Endothelial cell of umbilical vein (primary cell): ENCODE measurements at regions of chr10 and their contacts with region 1.

Region 1: DNA sequence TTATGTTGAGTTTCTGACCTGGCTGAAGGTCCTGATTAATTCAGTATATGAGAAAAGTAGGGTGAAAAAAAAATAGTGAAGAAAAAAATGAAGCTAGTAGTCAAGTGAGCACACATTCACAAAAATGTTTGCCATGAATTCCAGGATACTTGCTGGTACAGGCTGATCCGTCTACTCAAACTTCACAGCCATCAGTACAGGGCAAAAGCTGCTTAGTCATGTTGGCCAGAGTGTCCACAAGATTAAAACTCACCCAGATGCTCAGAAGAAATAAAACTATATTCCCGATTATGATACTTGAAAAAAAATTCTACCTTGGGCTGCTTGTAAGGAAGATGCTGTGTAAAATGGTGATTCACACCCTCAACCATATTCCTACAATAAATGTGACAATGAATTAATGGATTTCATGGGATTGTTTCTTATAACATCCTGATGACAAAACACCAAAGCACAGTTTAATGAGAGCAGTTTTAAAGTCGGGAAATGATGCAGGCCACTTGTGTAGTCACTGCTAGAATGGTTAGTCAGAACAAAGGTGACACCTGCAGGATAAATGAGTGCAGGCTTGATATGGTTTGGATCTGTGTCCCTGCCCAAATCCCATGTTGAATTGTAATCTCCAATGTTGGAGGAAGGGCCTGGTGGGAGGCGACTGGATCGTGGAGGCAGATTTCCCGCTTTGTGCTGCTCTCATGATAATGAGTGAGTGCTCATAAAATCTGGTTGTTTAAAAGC is 49.2 kb upstream of the ANKRD1 start:
- DNase-seq: no peak
- H3K4me3 ChIP-seq: no peak overlapping the region
- H3K27ac ChIP-seq: peak overlapping the region; percentile 28
- H3K4me1 ChIP-seq: peaks cover 8% of the 10 kb centered on the region
- H3K27me3 ChIP-seq: no peaks in the 10 kb centered on the region
- CTCF ChIP-seq: no peak
- POLR2A ChIP-seq: no peak

Region 2: DNA sequence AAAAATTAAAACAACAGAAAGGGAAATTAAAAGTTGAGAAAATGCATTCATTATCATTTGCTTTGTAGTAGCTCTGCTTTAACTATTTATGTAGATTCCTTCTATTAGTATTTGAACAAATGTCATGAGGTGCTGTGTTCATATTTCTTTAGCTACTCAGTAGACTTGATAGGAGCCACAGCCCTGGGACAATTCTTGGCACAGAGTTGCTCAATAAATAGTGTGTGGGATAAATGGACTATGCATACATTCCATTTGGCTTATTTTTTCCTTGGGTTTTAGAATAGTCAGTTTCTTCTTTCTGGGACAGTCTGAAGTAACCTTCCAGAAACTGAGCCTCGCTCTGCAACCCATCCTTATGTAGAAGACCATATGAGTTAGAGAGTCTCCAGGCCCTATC is 84.9 kb before region 1 on chr10:
- CTCF ChIA-PET with region 1: interaction called, 5 read pairs
- POLR2A ChIA-PET with region 1: no interaction called
- dilution Hi-C with region 1: no loop called
- intact Hi-C with region 1: loop called (anchors 1 kb)
- DNase-seq: no peak
- H3K4me3 ChIP-seq: no peak overlapping the region
- H3K27ac ChIP-seq: no peak overlapping the region
- H3K4me1 ChIP-seq: no peaks in the 10 kb centered on the region
- H3K27me3 ChIP-seq: no peaks in the 10 kb centered on the region
- CTCF ChIP-seq: no peak
- POLR2A ChIP-seq: no peak

Region 3: DNA sequence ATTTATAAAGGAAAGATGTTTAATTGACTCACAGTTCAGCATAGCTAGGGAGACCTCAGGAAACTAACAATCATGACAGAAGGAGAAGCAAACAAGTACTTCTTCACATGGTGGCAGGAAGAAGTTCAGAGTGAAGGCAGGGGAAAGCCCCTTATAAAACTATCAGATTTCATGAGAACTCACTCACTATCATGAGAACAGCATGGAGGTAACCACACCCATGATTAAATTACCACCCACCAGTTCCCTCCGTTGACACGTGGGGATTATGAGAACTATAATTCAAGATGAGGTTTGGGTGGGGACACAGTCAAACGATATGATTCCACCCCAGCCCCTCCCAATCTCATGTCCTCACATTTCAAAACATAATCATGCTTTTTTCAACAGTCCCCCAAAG is 126.2 kb after region 1 on chr10:
- CTCF ChIA-PET with region 1: no interaction called
- POLR2A ChIA-PET with region 1: no interaction called
- dilution Hi-C with region 1: no loop called
- intact Hi-C with region 1: no loop called
- DNase-seq: no peak
- H3K4me3 ChIP-seq: no peak overlapping the region
- H3K27ac ChIP-seq: no peak overlapping the region
- H3K4me1 ChIP-seq: no peaks in the 10 kb centered on the region
- H3K27me3 ChIP-seq: peaks cover 0 to 6% of the 10 kb centered on the region in 2 experiments
- CTCF ChIP-seq: no peak
- POLR2A ChIP-seq: no peak

Region 4: GRCh38 chr10:91185239-91185875 is 215.2 kb after region 1 on chr10:
- CTCF ChIA-PET with region 1: no interaction called
- POLR2A ChIA-PET with region 1: no interaction called
- dilution Hi-C with region 1: no loop called
- intact Hi-C with region 1: no loop called
- DNase-seq: no peak
- H3K4me3 ChIP-seq: no peak overlapping the region
- H3K27ac ChIP-seq: peak overlapping the region; percentile 12
- H3K4me1 ChIP-seq: peaks cover 2% of the 10 kb centered on the region
- H3K27me3 ChIP-seq: no peaks in the 10 kb centered on the region
- CTCF ChIP-seq: no peak
- POLR2A ChIP-seq: no peak

Region 5: GRCh38 chr10:91444211-91445182 is 474.4 kb after region 1 on chr10:
- CTCF ChIA-PET with region 1: no interaction called
- POLR2A ChIA-PET with region 1: no interaction called
- dilution Hi-C with region 1: no loop called
- intact Hi-C with region 1: no loop called
- DNase-seq: peak; percentile 43
- H3K4me3 ChIP-seq: no peak overlapping the region
- H3K27ac ChIP-seq: no peak overlapping the region
- H3K4me1 ChIP-seq: no peaks in the 10 kb centered on the region
- H3K27me3 ChIP-seq: no peaks in the 10 kb centered on the region
- CTCF ChIP-seq: no peak
- POLR2A ChIP-seq: no peak